Activated CD4-positive, alpha-beta T cell treated with anti-CD3 and anti-CD28 coated beads, Interleukin-2, amount 10 ng/mL, durations not matched to agents 7 days and 5 days (primary cell): ENCODE measurements at regions of chr6 and their contacts with region 1.

Region 1: DNA sequence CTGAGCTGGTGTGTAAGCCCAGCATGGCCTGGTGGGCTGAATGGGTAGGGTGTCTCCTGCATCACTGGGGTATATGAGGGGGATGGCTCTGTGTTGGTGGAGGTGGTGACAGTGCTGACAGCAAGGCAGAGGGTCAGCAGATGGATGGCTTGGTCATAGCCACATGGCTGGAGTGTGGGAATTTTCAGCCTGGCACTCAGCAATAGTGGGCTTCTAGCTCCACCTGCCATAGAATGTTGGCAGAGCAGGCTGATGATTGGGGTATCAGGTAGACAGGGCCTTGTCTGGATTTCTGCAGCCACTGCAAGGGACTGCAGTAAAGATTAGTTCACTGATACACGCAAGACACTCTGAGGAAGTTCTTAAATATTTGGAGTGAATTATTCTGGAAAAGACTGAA is 137.5 kb upstream of the BACH2 start:
- DNase-seq: no peak
- H3K4me3 Mint-ChIP-seq: no peak overlapping the region
- H3K27ac Mint-ChIP-seq: no peak overlapping the region
- H3K4me1 Mint-ChIP-seq: peaks cover 11% of the 10 kb centered on the region
- H3K27me3 Mint-ChIP-seq: peaks cover 1% of the 10 kb centered on the region

Region 2: GRCh38 chr6:90304308-90304707 is 129.8 kb before region 1 on chr6:
- CTCF ChIA-PET with region 1: no interaction called
- POLR2A ChIA-PET with region 1: no interaction called
- DNase-seq: no peak
- H3K4me3 Mint-ChIP-seq: no peak overlapping the region
- H3K27ac Mint-ChIP-seq: no peak overlapping the region
- H3K4me1 Mint-ChIP-seq: peaks cover 7% of the 10 kb centered on the region
- H3K27me3 Mint-ChIP-seq: peaks cover 45% of the 10 kb centered on the region

Region 3: GRCh38 chr6:90444160-90444714 is 10.1 kb after region 1 on chr6:
- CTCF ChIA-PET with region 1: interaction called, 17 read pairs
- POLR2A ChIA-PET with region 1: no interaction called
- DNase-seq: no peak
- H3K4me3 Mint-ChIP-seq: no peak overlapping the region
- H3K27ac Mint-ChIP-seq: peak overlapping the region; percentile 39
- H3K4me1 Mint-ChIP-seq: peaks cover 27% of the 10 kb centered on the region
- H3K27me3 Mint-ChIP-seq: no peaks in the 10 kb centered on the region